ENCODE measurements at regions of chrX and their contacts with region 1.

Region 1: GRCh38 chrX:130091958-130092522 is 18.3 kb downstream of the ELF4 start:
- H3K4me3 ChIP-seq: no peak overlapping the region
- H3K27ac ChIP-seq: no peak overlapping the region
- H3K4me1 ChIP-seq: no peaks in the 10 kb centered on the region
- CTCF ChIP-seq: no peak

Region 2: DNA sequence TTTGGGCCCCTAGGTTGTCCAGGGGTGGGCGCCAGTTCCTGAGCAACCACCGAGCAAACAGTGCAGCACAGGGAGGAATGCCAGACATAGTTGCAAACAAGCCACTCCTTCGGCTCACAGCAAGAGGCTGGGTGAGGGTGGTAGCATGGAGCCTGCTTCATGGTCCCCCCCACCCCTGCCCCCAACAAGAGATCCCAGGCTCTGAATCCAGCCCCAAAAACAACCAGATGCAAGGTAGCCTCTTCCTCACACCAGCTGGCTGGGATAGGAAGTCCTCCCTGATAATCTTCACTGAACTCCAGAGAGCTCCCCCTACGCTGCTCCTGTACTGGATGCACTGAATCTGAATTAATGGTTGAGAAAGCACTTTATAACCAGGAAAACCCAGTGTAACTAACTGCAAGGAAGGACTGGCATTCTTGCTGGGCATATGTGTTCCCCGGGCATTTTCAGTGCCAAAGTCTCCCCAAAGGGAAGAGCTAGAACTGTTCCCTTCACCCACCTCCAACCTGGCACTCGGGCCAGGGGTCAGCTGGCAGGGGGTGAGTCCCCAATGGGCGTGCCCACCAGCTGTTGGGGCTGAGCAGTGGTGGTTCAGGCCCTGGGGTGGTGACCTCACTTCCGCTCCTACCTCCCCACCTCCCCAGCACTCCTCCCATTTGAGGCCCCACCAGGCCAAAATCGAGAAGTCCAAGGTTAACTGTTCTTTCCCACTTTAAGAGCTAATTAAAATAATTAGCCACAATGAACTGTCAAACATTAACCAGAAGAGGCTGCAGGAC is 16.8 kb after region 1 on chrX:
- CTCF ChIA-PET with region 1: interaction called, 3 read pairs
- POLR2A ChIA-PET with region 1: interaction called, 17 read pairs
- H3K4me3 ChIP-seq: peak overlapping the region; percentile 60
- H3K27ac ChIP-seq: peak overlapping the region; percentile 81; the same call in 1 of the 2 replicates
- H3K4me1 ChIP-seq: peaks cover 3% of the 10 kb centered on the region; the same call in 1 of the 2 replicates
- CTCF ChIP-seq: peak; percentile 36

Region 3: DNA sequence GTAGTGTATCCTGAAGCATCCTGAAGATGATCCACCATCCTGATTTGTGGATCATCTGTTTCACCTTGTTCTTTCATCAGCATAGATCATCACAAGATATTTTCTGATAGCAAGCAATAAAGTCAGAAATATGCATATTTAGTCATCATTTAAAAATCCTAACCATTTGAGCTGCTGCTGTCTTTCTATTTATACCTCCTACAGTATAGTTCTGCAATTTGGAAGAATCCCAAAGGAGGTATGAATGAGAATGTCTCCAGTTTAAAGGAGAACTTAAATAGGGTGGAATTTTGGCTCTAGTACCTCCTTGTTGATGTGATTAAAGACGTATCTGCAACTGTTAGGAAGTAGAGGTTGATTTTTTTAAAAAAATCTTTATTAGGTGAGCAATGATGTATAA is 255.3 kb after region 1 on chrX:
- CTCF ChIA-PET with region 1: no interaction called
- POLR2A ChIA-PET with region 1: no interaction called
- H3K4me3 ChIP-seq: no peak overlapping the region
- H3K27ac ChIP-seq: no peak overlapping the region
- H3K4me1 ChIP-seq: no peaks in the 10 kb centered on the region
- CTCF ChIP-seq: no peak